HepG2 (cell line): ENCODE measurements at regions of chr13 and their contacts with region 1.

Region 1: DNA sequence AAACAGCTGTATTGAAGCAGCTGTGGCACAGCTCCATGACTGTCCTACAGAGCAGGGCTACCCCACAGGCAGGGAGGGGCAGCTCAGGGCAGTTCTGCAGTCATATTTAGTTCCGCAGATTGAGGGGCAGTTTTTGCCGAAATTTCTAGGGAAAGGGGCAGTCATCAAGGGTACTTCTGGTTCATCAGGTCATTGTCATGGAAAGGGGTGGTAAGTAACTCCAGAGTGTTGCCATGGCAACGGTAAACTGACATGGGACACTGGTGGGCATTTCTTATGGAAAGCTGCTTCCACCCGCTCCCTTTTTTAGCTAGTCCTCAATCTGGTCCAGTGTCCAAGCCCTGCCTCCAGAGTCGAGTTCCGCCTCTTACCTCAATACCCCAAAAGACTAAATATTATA is 702.8 kb downstream of the LIG4 start:
- DNase-seq: no peak
- ATAC-seq: no peak
- H3K4me3 ChIP-seq: no peak overlapping the region
- H3K27ac ChIP-seq: no peak overlapping the region
- H3K4me1 ChIP-seq: no peaks in the 10 kb centered on the region
- H3K27me3 ChIP-seq: no peaks in the 10 kb centered on the region
- CTCF ChIP-seq: no peak
- EP300 ChIP-seq: no peak
- POLR2A ChIP-seq: no peak
- RAD21 ChIP-seq: no peak

Region 2: DNA sequence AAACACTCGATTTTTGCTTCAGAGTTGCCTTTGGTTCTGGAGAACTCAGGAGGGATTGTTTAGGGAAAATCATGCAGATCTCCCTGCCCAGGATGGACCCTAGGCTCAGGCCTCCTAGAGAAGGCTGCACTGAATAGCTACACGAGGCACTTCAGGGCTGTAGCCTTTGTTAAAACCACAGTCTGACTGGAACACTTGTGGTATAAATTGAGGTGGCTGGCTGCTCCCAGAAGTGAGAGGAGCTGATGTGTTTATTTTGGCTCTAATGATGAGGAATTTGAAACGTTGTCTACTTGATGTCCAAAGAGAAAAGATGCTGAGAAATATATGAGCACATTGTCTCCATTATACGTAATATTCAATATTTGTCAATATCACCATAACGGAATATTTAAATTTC is 182.6 kb before region 1 on chr13:
- CTCF ChIA-PET with region 1: no interaction called
- POLR2A ChIA-PET with region 1: no interaction called
- in situ Hi-C with region 1: no loop called
- intact Hi-C with region 1: loop called (anchors 5 kb)
- DNase-seq: no peak
- ATAC-seq: no peak
- H3K4me3 ChIP-seq: no peak overlapping the region
- H3K27ac ChIP-seq: no peak overlapping the region
- H3K4me1 ChIP-seq: no peaks in the 10 kb centered on the region
- H3K27me3 ChIP-seq: no peaks in the 10 kb centered on the region
- CTCF ChIP-seq: no peak
- EP300 ChIP-seq: no peak
- POLR2A ChIP-seq: no peak
- RAD21 ChIP-seq: no peak

Region 3: GRCh38 chr13:107407074-107407473 is 105.5 kb before region 1 on chr13:
- CTCF ChIA-PET with region 1: no interaction called
- POLR2A ChIA-PET with region 1: no interaction called
- in situ Hi-C with region 1: no loop called
- intact Hi-C with region 1: no loop called
- DNase-seq: no peak
- ATAC-seq: no peak
- H3K4me3 ChIP-seq: no peak overlapping the region
- H3K27ac ChIP-seq: no peak overlapping the region
- H3K4me1 ChIP-seq: no peaks in the 10 kb centered on the region
- H3K27me3 ChIP-seq: no peaks in the 10 kb centered on the region
- CTCF ChIP-seq: no peak
- EP300 ChIP-seq: no peak
- POLR2A ChIP-seq: no peak
- RAD21 ChIP-seq: no peak

Region 4: GRCh38 chr13:107421028-107421427 is 91.5 kb before region 1 on chr13:
- CTCF ChIA-PET with region 1: no interaction called
- POLR2A ChIA-PET with region 1: no interaction called
- in situ Hi-C with region 1: no loop called
- intact Hi-C with region 1: no loop called
- DNase-seq: no peak
- ATAC-seq: no peak
- H3K4me3 ChIP-seq: no peak overlapping the region
- H3K27ac ChIP-seq: no peak overlapping the region
- H3K4me1 ChIP-seq: no peaks in the 10 kb centered on the region
- H3K27me3 ChIP-seq: no peaks in the 10 kb centered on the region; a peak in 1 of 5 replicates
- CTCF ChIP-seq: no peak
- EP300 ChIP-seq: no peak
- POLR2A ChIP-seq: no peak
- RAD21 ChIP-seq: no peak